CD8-positive, alpha-beta T cell (primary cell): ENCODE measurements at regions of chr12 and their contacts with region 1.

Region 1: DNA sequence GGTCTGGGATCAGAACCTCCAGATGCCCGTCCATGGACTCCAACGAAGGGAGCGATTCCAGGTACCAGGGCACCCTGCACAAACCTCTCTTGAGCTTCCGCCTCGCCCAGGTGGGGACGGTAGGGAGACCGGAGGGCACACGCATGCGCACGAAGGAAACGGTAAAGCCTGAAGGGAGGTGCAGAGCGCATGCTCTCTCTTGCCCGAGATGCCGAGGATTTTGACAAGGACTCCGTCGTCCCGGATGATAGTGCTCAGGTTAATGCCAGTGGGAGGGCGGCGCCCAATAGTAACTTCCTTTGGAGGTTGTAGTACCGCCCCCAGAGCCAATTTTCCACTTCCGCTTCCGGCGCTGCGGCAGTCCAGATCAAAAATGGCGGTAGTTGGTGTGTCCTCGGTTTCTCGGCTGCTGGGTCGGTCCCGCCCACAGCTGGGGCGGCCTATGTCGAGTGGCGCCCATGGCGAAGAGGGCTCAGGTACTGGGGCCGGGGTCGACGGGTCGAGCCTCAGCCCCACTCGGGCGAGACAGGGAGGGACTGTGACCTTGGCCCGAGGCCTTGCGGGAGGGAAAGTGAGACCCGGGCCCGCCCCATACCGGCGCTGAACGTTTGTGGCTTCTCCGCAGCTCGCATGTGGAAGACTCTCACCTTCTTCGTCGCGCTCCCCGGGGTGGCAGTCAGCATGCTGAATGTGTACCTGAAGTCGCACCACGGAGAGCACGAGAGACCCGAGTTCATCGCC is at the start of gene COX6A1:
- DNase-seq: peak; percentile 91 to 100 (median 96)
- ATAC-seq: peak; percentile 95
- H3K4me3 ChIP-seq: peak within 1 kb of the TSS; percentile 74 to 76
- H3K4me3 Mint-ChIP-seq: peak within 1 kb of the TSS; percentile 88
- H3K27ac ChIP-seq: peak within 1 kb of the TSS; percentile 58 to 85
- H3K27ac Mint-ChIP-seq: peak within 1 kb of the TSS; percentile 91
- H3K4me1 ChIP-seq: peaks cover 26% of the 10 kb centered on the region
- H3K4me1 Mint-ChIP-seq: peaks cover 26% of the 10 kb centered on the region
- H3K27me3 ChIP-seq: no peaks in the 10 kb centered on the region
- H3K27me3 Mint-ChIP-seq: peaks cover 3% of the 10 kb centered on the region
- CTCF ChIP-seq: no peak
- total RNA-seq, gene COX6A1: 118 to 124 TPM

Region 2: GRCh38 chr12:120469450-120470149 is 31.7 kb after region 1 on chr12 and contains the start of gene SRSF9:
- CTCF ChIA-PET with region 1: interaction called, 12 read pairs
- POLR2A ChIA-PET with region 1: interaction called, 9 read pairs
- intact Hi-C with region 1: loop called (anchors 1 kb)
- DNase-seq: peak; percentile 90 to 99 (median 97)
- ATAC-seq: peak; percentile 84
- H3K4me3 ChIP-seq: peak within 1 kb of the TSS; percentile 77 to 89
- H3K4me3 Mint-ChIP-seq: peak within 1 kb of the TSS; percentile 86
- H3K27ac ChIP-seq: peak within 1 kb of the TSS; percentile 70 to 82
- H3K27ac Mint-ChIP-seq: peak within 1 kb of the TSS; percentile 91
- H3K4me1 ChIP-seq: peaks cover 26% of the 10 kb centered on the region
- H3K4me1 Mint-ChIP-seq: peaks cover 40% of the 10 kb centered on the region
- H3K27me3 ChIP-seq: no peaks in the 10 kb centered on the region
- H3K27me3 Mint-ChIP-seq: no peaks in the 10 kb centered on the region
- CTCF ChIP-seq: peak; percentile 96
- total RNA-seq, gene SRSF9: 137 to 139 TPM

Region 3: GRCh38 chr12:120534203-120534702 is 96.3 kb after region 1 on chr12 and contains the start of gene RNF10:
- CTCF ChIA-PET with region 1: interaction called, 3 read pairs
- POLR2A ChIA-PET with region 1: interaction called, 3 read pairs
- intact Hi-C with region 1: loop called (anchors 2 kb)
- DNase-seq: peak; percentile 48 to 92 (median 73)
- ATAC-seq: peak; percentile 69
- H3K4me3 ChIP-seq: peak within 1 kb of the TSS; percentile 89 to 95
- H3K4me3 Mint-ChIP-seq: peak within 1 kb of the TSS; percentile 96
- H3K27ac ChIP-seq: peak within 1 kb of the TSS; percentile 76 to 83
- H3K27ac Mint-ChIP-seq: peak within 1 kb of the TSS; percentile 95
- H3K4me1 ChIP-seq: peaks cover 38% of the 10 kb centered on the region
- H3K4me1 Mint-ChIP-seq: peaks cover 57% of the 10 kb centered on the region
- H3K27me3 ChIP-seq: no peaks in the 10 kb centered on the region
- H3K27me3 Mint-ChIP-seq: no peaks in the 10 kb centered on the region
- CTCF ChIP-seq: no peak
- total RNA-seq, gene RNF10: 402 to 410 TPM

Region 4: DNA sequence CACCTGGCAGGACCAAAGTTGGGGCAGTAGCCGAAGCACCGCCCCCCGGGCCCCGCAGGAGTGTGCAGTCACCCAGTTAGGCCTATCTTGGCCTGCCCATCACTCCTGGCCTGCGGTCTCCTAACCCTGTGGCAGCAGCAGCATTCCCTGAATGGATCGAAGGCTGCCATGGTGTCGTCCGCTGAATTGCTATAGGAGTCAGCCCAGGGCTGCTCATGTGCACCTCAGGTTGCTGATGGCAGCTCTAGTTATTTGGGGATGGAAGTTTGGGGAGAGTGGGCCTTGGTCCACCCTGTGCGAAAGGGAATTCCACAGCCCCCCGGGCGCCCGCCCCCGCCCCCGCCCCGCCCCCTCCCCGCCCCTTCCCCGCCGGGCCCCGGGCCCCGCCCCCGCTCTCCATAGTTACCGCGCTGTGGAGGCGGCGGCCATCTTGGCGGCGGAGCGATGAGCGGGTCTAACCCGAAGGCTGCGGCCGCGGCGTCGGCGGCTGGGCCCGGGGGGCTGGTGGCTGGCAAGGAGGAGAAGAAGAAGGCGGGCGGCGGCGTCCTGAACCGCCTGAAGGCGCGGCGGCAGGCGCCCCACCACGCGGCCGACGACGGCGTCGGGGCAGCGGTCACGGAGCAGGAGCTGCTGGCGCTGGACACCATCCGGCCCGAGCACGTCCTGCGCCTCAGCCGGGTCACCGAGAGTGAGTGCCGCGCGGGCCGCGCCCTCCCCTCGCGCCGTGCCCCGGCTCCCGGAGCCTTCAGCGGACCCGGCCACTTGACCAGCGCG is 272.3 kb after region 1 on chr12 and contains the start of gene UNC119B:
- CTCF ChIA-PET with region 1: no interaction called
- POLR2A ChIA-PET with region 1: no interaction called
- intact Hi-C with region 1: loop called (anchors 5 to 10 kb)
- DNase-seq: peak; percentile 38 to 85 (median 77)
- ATAC-seq: peak; percentile 88
- H3K4me3 ChIP-seq: peak within 1 kb of the TSS; percentile 64 to 68
- H3K4me3 Mint-ChIP-seq: peak within 1 kb of the TSS; percentile 93
- H3K27ac ChIP-seq: peak within 1 kb of the TSS; percentile 40 to 70
- H3K27ac Mint-ChIP-seq: peak within 1 kb of the TSS; percentile 89
- H3K4me1 ChIP-seq: peaks cover 22% of the 10 kb centered on the region
- H3K4me1 Mint-ChIP-seq: peaks cover 37% of the 10 kb centered on the region
- H3K27me3 ChIP-seq: no peaks in the 10 kb centered on the region
- H3K27me3 Mint-ChIP-seq: no peaks in the 10 kb centered on the region
- CTCF ChIP-seq: no peak
- total RNA-seq, gene UNC119B: 8.1 to 8.4 TPM

Region 5: DNA sequence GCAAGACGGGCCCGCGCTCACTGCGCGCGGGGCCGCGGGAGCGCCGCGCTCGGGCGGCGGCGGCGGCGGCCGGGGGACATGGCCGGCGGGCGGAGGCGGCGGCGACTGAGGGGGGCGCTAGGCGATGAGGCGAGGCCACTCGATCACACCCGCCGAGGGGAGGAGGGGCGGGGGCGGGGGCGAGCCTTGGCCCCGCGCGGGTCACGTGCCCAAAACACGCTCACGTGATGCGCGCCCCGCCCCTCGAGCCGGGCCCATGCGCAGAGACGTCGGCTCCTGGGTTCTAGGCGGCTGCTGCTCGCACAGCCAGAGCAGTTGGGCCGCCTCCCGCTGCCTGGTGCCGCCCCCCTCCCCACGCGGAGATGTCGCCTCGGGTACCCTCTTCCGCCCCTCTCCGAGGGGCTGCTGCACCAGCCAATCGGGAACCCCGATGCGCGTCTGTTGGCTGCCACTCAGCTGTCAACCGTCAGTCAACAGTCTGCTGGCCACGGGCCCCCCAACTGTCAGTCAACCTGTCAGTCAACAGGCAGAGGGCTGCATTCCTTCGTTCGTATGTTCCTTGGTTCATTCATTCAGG is 466.4 kb after region 1 on chr12 and contains the start of gene SPPL3:
- CTCF ChIA-PET with region 1: no interaction called
- POLR2A ChIA-PET with region 1: no interaction called
- intact Hi-C with region 1: loop called in 1 of 2 experiments (anchors 5 kb)
- DNase-seq: peak; percentile 86 to 96 (median 93)
- ATAC-seq: peak; percentile 75
- H3K4me3 ChIP-seq: peak within 1 kb of the TSS; percentile 76 to 82
- H3K4me3 Mint-ChIP-seq: peak within 1 kb of the TSS; percentile 99
- H3K27ac ChIP-seq: peak within 1 kb of the TSS; percentile 66 to 84
- H3K27ac Mint-ChIP-seq: peak within 1 kb of the TSS; percentile 98
- H3K4me1 ChIP-seq: peaks cover 21% of the 10 kb centered on the region
- H3K4me1 Mint-ChIP-seq: peaks cover 32% of the 10 kb centered on the region
- H3K27me3 ChIP-seq: no peaks in the 10 kb centered on the region
- H3K27me3 Mint-ChIP-seq: no peaks in the 10 kb centered on the region
- CTCF ChIP-seq: no peak
- total RNA-seq, gene SPPL3: 42.3 to 42.9 TPM